Activated naive CD4-positive, alpha-beta T cell treated with anti-CD3 and anti-CD28 coated beads for 36 hours (primary cell): ENCODE measurements at regions of chr5 and their contacts with region 1.

Region 1: GRCh38 chr5:55982957-55983381 is 11.8 kb downstream of the IL6ST start:
- DNase-seq: peak; percentile 53
- H3K4me3 Mint-ChIP-seq: peak overlapping the region; percentile 61
- H3K27ac Mint-ChIP-seq: peak overlapping the region; percentile 87
- H3K4me1 Mint-ChIP-seq: peaks cover 82% of the 10 kb centered on the region
- H3K27me3 Mint-ChIP-seq: no peaks in the 10 kb centered on the region

Region 2: DNA sequence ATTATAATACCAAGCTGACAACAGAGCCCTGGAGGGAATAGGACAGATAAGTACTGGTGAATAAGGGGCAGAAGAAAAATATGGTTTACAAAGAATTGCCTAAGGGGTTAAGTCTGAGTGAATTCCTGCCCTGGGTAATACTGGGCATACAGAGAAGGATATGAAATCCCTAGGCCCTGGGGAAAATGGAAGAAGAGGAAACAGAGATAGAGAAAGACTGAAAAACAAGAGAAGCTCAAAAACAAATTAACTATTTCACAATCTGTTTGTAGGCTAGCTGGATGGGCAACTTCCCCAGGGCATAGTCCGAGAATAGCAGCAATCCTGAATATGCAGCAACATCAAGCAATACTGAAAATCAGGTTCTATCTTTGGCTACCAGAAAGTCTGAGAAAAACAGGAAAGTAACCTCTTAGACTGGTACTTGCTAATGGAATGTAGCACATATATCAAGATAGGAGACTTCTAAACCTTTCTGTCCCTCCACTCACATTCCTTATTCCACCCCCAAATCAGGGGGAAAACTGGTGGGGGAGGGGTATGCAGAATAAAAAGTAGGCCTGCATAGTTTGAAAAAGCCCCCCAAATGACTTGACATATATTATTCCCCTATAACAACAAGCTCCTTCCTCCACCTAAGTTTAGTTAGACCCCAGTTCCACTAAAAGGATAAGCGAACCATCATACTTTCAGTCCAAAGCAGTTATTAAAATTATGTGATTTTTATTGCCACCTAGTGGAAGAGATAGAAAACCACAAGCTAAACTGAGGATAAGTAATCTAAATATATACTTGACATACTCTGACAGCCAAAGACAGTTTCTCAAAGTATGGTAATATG is 291.5 kb before region 1 on chr5:
- CTCF ChIA-PET with region 1: no interaction called
- intact Hi-C with region 1: no loop called
- DNase-seq: no peak
- H3K4me3 Mint-ChIP-seq: no peak overlapping the region
- H3K27ac Mint-ChIP-seq: no peak overlapping the region
- H3K4me1 Mint-ChIP-seq: peaks cover 3% of the 10 kb centered on the region
- H3K27me3 Mint-ChIP-seq: no peaks in the 10 kb centered on the region

Region 3: DNA sequence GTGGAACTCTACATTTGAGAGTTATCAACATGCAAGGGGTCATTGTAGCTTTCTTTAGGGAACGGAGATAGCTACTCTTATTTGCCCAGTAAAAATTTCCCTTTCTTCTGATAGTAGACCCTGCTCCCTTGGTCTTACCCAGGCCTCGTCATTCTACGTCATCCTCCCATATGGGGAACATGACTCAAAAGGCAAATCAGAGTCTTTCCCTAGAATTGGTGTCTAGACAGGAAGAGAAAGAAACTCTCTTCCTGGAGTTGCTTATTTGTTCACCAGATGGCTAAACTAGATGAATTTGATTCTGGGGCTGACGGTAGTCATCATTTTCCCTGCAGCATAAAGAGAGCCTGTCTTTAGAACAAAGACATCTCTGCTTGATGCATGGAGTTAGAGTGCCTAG is 258.7 kb before region 1 on chr5:
- CTCF ChIA-PET with region 1: no interaction called
- intact Hi-C with region 1: no loop called
- DNase-seq: no peak
- H3K4me3 Mint-ChIP-seq: no peak overlapping the region
- H3K27ac Mint-ChIP-seq: no peak overlapping the region
- H3K4me1 Mint-ChIP-seq: no peaks in the 10 kb centered on the region
- H3K27me3 Mint-ChIP-seq: no peaks in the 10 kb centered on the region

Region 4: GRCh38 chr5:55885359-55885758 is 97.6 kb before region 1 on chr5:
- CTCF ChIA-PET with region 1: no interaction called
- intact Hi-C with region 1: no loop called
- DNase-seq: no peak
- H3K4me3 Mint-ChIP-seq: no peak overlapping the region
- H3K27ac Mint-ChIP-seq: no peak overlapping the region
- H3K4me1 Mint-ChIP-seq: peaks cover 6% of the 10 kb centered on the region
- H3K27me3 Mint-ChIP-seq: peaks cover 4% of the 10 kb centered on the region

Region 5: GRCh38 chr5:55966284-55966683 is 16.7 kb before region 1 on chr5:
- CTCF ChIA-PET with region 1: interaction called, 5 read pairs
- intact Hi-C with region 1: loop called (anchors 1 kb)
- DNase-seq: peak; percentile 35
- H3K4me3 Mint-ChIP-seq: no peak overlapping the region
- H3K27ac Mint-ChIP-seq: peak overlapping the region; percentile 78
- H3K4me1 Mint-ChIP-seq: peaks cover 54% of the 10 kb centered on the region
- H3K27me3 Mint-ChIP-seq: no peaks in the 10 kb centered on the region

Region 6: GRCh38 chr5:56012281-56012963 is 29.5 kb after region 1 on chr5:
- CTCF ChIA-PET with region 1: interaction called, 4 read pairs
- intact Hi-C with region 1: loop called (anchors 1 kb)
- DNase-seq: peak; percentile 66
- H3K4me3 Mint-ChIP-seq: peak overlapping the region; percentile 33
- H3K27ac Mint-ChIP-seq: peak overlapping the region; percentile 77
- H3K4me1 Mint-ChIP-seq: peaks cover 41% of the 10 kb centered on the region
- H3K27me3 Mint-ChIP-seq: no peaks in the 10 kb centered on the region

Region 7: DNA sequence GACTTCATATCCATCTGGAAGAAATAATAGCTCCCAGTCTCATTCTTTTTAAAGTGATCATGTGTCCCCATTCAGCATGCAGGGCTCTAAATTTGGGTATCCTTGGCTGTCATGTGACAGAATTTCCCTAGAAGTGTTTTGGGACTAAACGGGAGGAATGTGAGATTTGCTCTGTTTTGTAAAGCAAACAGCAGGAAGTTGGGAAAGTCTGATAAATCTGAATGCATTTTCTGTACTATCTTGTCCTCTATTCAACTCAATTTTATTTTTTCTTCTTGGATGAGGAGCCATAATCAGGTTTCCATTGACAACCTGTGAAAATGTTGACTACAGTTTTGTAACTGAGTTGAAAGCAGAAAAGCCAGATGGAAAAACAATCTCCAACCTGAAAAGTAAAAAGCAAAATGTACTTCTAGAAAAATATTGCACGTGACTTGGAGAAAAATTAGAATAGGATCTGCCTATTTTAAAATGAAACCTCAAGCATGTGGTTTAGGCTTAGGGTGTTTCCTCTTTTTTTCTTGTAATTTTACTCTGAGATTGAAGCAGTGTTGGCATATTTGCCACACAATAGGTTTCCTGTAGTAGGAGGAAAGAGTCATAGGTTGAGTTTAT is 88.0 kb after region 1 on chr5:
- CTCF ChIA-PET with region 1: interaction called, 3 read pairs
- intact Hi-C with region 1: loop called (anchors 1 kb)
- DNase-seq: no peak
- H3K4me3 Mint-ChIP-seq: peak overlapping the region; percentile 59
- H3K27ac Mint-ChIP-seq: peak overlapping the region; percentile 82
- H3K4me1 Mint-ChIP-seq: peaks cover 86% of the 10 kb centered on the region
- H3K27me3 Mint-ChIP-seq: no peaks in the 10 kb centered on the region

Region 8: GRCh38 chr5:56148453-56148971 is 165.5 kb after region 1 on chr5:
- CTCF ChIA-PET with region 1: interaction called, 3 read pairs
- intact Hi-C with region 1: loop called (anchors 2 kb)
- DNase-seq: peak; percentile 80
- H3K4me3 Mint-ChIP-seq: peak overlapping the region; percentile 53
- H3K27ac Mint-ChIP-seq: peak overlapping the region; percentile 93
- H3K4me1 Mint-ChIP-seq: peaks cover 68% of the 10 kb centered on the region
- H3K27me3 Mint-ChIP-seq: no peaks in the 10 kb centered on the region

Region 9: GRCh38 chr5:56264417-56265025 is 281.6 kb after region 1 on chr5:
- CTCF ChIA-PET with region 1: interaction called, 3 read pairs
- intact Hi-C with region 1: loop called (anchors 5 kb)
- DNase-seq: peak; percentile 49
- H3K4me3 Mint-ChIP-seq: no peak overlapping the region
- H3K27ac Mint-ChIP-seq: no peak overlapping the region
- H3K4me1 Mint-ChIP-seq: peaks cover 2% of the 10 kb centered on the region
- H3K27me3 Mint-ChIP-seq: no peaks in the 10 kb centered on the region